PC-9 (cell line): ENCODE measurements at regions of chr11 and their contacts with region 1.

Region 1: DNA sequence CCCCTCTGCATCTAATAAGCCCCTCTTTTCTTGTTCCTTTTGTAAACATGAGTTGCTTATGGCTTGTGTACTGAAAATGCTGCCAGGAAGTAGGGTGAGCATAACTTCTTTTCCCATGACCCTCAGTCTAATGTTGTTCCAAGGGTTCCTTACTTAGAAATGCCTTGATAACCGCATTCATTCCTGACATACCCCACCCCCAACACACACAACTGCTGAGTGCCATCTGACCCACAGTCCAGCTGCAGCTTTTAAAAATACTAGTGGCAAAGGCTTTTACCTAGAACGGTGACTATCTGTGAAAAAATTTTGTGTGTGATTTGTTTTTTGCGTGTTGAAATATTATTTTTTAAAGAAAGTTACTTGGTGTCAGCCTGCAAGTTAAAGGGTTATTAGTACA is 52.6 kb downstream of the ARHGAP42 start:
- DNase-seq: peak; percentile 74 to 91
- H3K4me3 ChIP-seq: no peak overlapping the region
- H3K27ac ChIP-seq: peak overlapping the region; percentile 63
- H3K4me1 ChIP-seq: peaks cover 40% of the 10 kb centered on the region
- H3K27me3 ChIP-seq: no peaks in the 10 kb centered on the region
- CTCF ChIP-seq: no peak

Region 2: DNA sequence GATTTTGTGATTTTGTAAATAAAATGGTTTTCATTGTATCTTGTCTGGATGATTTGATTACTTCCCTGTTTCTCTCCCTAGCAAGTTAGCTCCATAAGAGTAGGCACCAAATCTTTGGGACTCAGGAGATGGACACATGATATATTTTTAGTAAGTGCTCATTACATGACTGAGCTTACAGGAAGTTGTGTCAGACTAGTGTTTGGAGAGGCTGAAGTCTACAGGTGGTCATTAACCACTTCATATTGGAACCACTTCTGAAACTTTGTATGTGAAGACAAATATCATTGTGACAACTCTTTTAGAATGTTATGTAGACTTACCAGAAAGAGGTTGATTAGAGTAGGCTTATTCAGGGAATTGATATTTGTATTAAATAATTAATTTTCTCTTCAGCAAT is 33.5 kb before region 1 on chr11:
- CTCF ChIA-PET with region 1: no interaction called
- POLR2A ChIA-PET with region 1: no interaction called
- intact Hi-C with region 1: no loop called
- DNase-seq: no peak
- H3K4me3 ChIP-seq: no peak overlapping the region
- H3K27ac ChIP-seq: no peak overlapping the region
- H3K4me1 ChIP-seq: peaks cover 14% of the 10 kb centered on the region
- H3K27me3 ChIP-seq: no peaks in the 10 kb centered on the region
- CTCF ChIP-seq: no peak

Region 3: GRCh38 chr11:100719809-100720221 is 19.9 kb before region 1 on chr11:
- CTCF ChIA-PET with region 1: no interaction called
- POLR2A ChIA-PET with region 1: interaction called, 7 read pairs
- intact Hi-C with region 1: loop called (anchors 1 kb)
- DNase-seq: peak; percentile 76 to 91
- H3K4me3 ChIP-seq: peak overlapping the region; percentile 9; the same call in 1 of the 2 replicates
- H3K27ac ChIP-seq: peak overlapping the region; percentile 80
- H3K4me1 ChIP-seq: peaks cover 30% of the 10 kb centered on the region
- H3K27me3 ChIP-seq: no peaks in the 10 kb centered on the region
- CTCF ChIP-seq: no peak

Region 4: GRCh38 chr11:100753172-100753543 is 13.5 kb after region 1 on chr11:
- CTCF ChIA-PET with region 1: no interaction called
- POLR2A ChIA-PET with region 1: no interaction called
- intact Hi-C with region 1: loop called (anchors 1 kb)
- DNase-seq: peak; percentile 84 to 98
- H3K4me3 ChIP-seq: no peak overlapping the region; the same call in 1 of the 2 replicates
- H3K27ac ChIP-seq: peak overlapping the region; percentile 76
- H3K4me1 ChIP-seq: peaks cover 33% of the 10 kb centered on the region
- H3K27me3 ChIP-seq: no peaks in the 10 kb centered on the region
- CTCF ChIP-seq: peak; percentile 13; the same call in 1 of the 2 replicates

Region 5: GRCh38 chr11:100827934-100828661 is 88.4 kb after region 1 on chr11:
- CTCF ChIA-PET with region 1: no interaction called
- POLR2A ChIA-PET with region 1: no interaction called
- intact Hi-C with region 1: loop called (anchors 1 kb)
- DNase-seq: peak; percentile 46 to 95
- H3K4me3 ChIP-seq: no peak overlapping the region
- H3K27ac ChIP-seq: peak overlapping the region; percentile 75
- H3K4me1 ChIP-seq: peaks cover 50% of the 10 kb centered on the region
- H3K27me3 ChIP-seq: no peaks in the 10 kb centered on the region
- CTCF ChIP-seq: peak; percentile 67